Mammary epithelial cell (primary cell): ENCODE measurements at regions of chr7 and their contacts with region 1.

Region 1: GRCh38 chr7:35657125-35657524 is 37.8 kb downstream of the HERPUD2 start:
- DNase-seq: no peak
- H3K4me3 ChIP-seq: no peak overlapping the region
- H3K27ac ChIP-seq: no peak overlapping the region
- H3K4me1 ChIP-seq: no peaks in the 10 kb centered on the region
- H3K27me3 ChIP-seq: no peaks in the 10 kb centered on the region
- CTCF ChIP-seq: no peak

Region 2: DNA sequence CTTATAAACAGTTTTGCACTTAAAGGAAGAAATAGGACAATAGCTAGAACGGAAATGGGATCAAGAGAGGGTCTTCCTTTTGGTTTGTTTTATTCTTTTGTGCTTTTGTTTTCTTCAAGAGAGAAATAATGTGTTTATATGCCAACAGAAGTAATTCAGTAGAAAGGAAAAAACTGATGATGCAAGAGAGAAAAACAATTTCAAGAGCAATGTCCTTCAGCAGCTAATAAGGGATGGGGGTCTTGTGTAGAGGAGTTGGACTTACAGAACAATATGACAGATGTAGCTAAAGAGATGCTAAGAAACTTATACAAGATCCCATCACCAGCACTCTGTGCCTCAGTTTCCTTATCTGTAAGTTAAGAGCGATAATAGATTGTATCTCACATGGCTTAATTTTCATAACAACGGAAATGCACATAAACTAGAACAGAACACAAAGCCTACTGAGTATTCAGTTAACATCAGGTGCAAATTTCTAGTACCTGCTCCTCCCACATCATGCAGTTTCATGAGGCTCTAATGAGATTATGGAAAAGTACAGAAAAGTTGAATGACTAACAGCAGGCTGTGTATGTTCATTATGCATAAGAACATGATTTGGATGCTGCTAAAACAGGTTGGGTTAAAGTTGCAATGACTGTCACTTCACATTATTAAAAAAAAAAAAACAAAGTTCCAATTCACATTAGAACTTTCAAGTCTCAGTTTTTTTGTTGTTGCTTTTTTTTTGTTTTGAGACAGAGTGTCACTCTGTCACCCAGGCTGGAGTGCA is 20.6 kb after region 1 on chr7:
- CTCF ChIA-PET with region 1: no interaction called
- dilution Hi-C with region 1: no loop called
- in situ Hi-C with region 1: no loop called
- intact Hi-C with region 1: loop called (anchors 1 kb)
- DNase-seq: no peak
- H3K4me3 ChIP-seq: no peak overlapping the region
- H3K27ac ChIP-seq: no peak overlapping the region
- H3K4me1 ChIP-seq: no peaks in the 10 kb centered on the region
- H3K27me3 ChIP-seq: no peaks in the 10 kb centered on the region
- CTCF ChIP-seq: no peak

Region 3: DNA sequence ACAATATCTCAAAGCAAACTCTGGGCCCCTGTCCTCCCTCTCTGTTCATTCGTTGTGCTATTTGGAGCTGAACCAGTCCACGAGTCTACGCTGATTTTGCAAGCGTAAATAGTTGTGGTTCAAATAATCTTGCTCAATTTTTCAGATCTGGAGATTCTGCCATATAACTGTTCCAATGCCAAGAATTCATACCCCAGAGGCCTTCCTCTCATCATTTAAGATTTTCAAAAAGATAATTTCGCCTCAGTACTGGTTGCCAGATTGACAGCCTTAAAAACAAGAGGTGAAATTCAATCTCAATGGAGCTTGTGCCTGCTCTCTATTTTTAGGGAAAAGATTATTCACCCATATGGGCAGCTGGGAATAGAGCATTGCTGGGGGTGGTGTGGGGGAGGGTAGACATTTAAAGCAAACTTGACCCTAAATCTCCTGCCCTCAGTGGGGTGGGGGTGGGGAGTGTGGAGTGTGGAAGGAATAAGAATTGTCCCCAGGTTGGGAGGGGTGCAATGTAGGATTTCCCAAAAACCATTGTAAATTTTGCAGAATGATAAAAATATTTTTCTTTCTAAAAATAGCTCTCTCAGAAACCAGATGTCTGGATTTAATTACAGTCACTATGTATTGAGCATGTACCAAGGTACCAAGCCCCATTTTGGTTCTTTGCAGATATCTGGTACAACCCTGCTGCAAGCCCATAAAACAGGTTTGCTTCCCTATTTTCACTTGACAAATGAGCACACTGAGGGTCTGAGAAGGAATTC is 391.2 kb after region 1 on chr7:
- CTCF ChIA-PET with region 1: no interaction called
- dilution Hi-C with region 1: no loop called
- in situ Hi-C with region 1: no loop called
- intact Hi-C with region 1: no loop called
- DNase-seq: peak; percentile 83
- H3K4me3 ChIP-seq: no peak overlapping the region
- H3K27ac ChIP-seq: no peak overlapping the region
- H3K4me1 ChIP-seq: peaks cover 18% of the 10 kb centered on the region
- H3K27me3 ChIP-seq: no peaks in the 10 kb centered on the region
- CTCF ChIP-seq: no peak